Tibial artery (tissue), 4 donors: ENCODE measurements at regions of chr9 and their contacts with region 1.

Region 1: DNA sequence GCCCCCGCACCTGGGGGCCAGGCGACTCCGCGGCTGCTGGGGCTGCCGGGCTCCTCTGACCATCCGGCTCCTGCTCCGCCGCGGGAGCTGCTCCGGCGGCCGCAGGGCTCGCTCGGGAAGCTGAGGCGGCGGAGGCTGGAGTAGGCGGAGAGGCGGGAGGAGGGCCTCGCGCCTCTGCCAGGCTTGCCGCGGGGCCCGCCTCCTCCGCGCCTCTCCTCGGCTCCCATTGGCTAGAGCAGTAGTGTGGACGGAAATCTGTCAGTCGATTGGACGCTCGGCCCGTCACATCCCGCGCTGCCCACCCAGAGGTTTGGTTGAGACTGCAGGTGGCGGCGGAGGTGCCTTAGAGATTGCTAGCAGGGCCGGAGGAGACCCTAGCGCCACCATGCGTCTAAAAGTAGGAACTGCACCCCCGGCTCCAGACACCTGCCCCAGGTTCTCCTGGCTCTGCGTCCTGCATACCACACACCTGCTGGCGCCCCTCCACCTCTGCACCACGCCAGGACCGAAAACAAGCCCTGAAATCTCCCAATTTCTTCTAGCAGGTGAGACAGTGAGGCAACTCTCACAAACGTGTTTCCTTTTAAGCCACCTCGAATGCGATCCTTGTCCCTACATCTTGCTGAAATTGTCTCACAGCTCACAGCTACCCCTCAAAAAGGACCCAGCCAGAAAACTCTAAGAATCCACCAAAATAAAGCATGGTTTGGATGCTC is at the start of gene SCAI:
- DNase-seq: peak; percentile 99 to 100
- H3K4me3 ChIP-seq: peak within 1 kb of the TSS; percentile 82 to 97
- H3K27ac ChIP-seq: peak within 1 kb of the TSS; percentile 80 to 81
- H3K4me1 ChIP-seq: peaks cover 0 to 25% (median 9%) of the 10 kb centered on the region in 4 donors
- H3K27me3 ChIP-seq: no peaks in the 10 kb centered on the region
- CTCF ChIP-seq: peak; percentile 98 to 99

Region 2: GRCh38 chr9:124861342-124862229 is 281.9 kb before region 1 on chr9 and contains the starts of genes ARPC5L and RPL35:
- intact Hi-C with region 1: loop called (anchors 10 kb)
- DNase-seq: peak; percentile 92 to 96
- H3K4me3 ChIP-seq: peak within 1 kb of the TSS; percentile 60 to 78
- H3K27ac ChIP-seq: peak within 1 kb of the TSS; percentile 81 to 84
- H3K4me1 ChIP-seq: peaks cover 0 to 25% (median 23%) of the 10 kb centered on the region in 4 donors
- H3K27me3 ChIP-seq: no peaks in the 10 kb centered on the region
- CTCF ChIP-seq: peak; percentile 17 to 25

Region 3: GRCh38 chr9:124940693-124941453 is 202.7 kb before region 1 on chr9 and contains the start of gene GOLGA1:
- intact Hi-C with region 1: loop called (anchors 5 kb)
- DNase-seq: peak; percentile 93 to 97
- H3K4me3 ChIP-seq: peak within 1 kb of the TSS; percentile 68 to 81
- H3K27ac ChIP-seq: peak within 1 kb of the TSS; percentile 89 to 97
- H3K4me1 ChIP-seq: peaks cover 0 to 17% (median 12%) of the 10 kb centered on the region in 4 donors
- H3K27me3 ChIP-seq: no peaks in the 10 kb centered on the region
- CTCF ChIP-seq: peak in 1 of 2 experiments; percentile 20

Region 4: GRCh38 chr9:125706661-125707471 is 563.3 kb after region 1 on chr9 and contains the start of gene MAPKAP1:
- intact Hi-C with region 1: no loop called
- DNase-seq: peak; percentile 95 to 98
- H3K4me3 ChIP-seq: peak within 1 kb of the TSS; percentile 68 to 99
- H3K27ac ChIP-seq: peak within 1 kb of the TSS; percentile 67 to 86
- H3K4me1 ChIP-seq: peaks cover 0 to 22% (median 16%) of the 10 kb centered on the region in 4 donors
- H3K27me3 ChIP-seq: no peaks in the 10 kb centered on the region
- CTCF ChIP-seq: no peak